HCT116 (cell line): ENCODE measurements at regions of chr4 and their contacts with region 1.

Region 1: GRCh38 chr4:7151668-7152227 is 40.6 kb upstream of the SORCS2 start:
- DNase-seq: no peak
- ATAC-seq: no peak
- H3K4me3 ChIP-seq: no peak overlapping the region
- H3K27ac ChIP-seq: no peak overlapping the region
- H3K4me1 ChIP-seq: peaks cover 0 to 7% of the 10 kb centered on the region in 2 experiments; a peak in 2 of 4 replicates
- H3K27me3 ChIP-seq: peaks cover 3% of the 10 kb centered on the region; the same call in 1 of the 2 replicates
- CTCF ChIP-seq: peak; percentile 35 to 45 (median 44); a peak in 4 of 6 replicates
- POLR2A ChIP-seq: no peak
- RAD21 ChIP-seq: peak; percentile 63

Region 2: GRCh38 chr4:7295911-7296660 is 144.3 kb after region 1 on chr4:
- CTCF ChIA-PET with region 1: no interaction called
- POLR2A ChIA-PET with region 1: no interaction called
- RAD21 ChIA-PET with region 1: no interaction called
- intact Hi-C with region 1: loop called (anchors 1 kb)
- DNase-seq: peak; percentile 10
- ATAC-seq: peak; percentile 77
- H3K4me3 ChIP-seq: no peak overlapping the region
- H3K27ac ChIP-seq: no peak overlapping the region
- H3K4me1 ChIP-seq: no peaks in the 10 kb centered on the region
- H3K27me3 ChIP-seq: no peaks in the 10 kb centered on the region; the same call in 1 of the 2 replicates
- CTCF ChIP-seq: peak; percentile 49 to 81 (median 68); a peak in 5 of 6 replicates
- POLR2A ChIP-seq: no peak
- RAD21 ChIP-seq: peak; percentile 91